ENCODE measurements at regions of chr2 and their contacts with region 1.

Region 1: DNA sequence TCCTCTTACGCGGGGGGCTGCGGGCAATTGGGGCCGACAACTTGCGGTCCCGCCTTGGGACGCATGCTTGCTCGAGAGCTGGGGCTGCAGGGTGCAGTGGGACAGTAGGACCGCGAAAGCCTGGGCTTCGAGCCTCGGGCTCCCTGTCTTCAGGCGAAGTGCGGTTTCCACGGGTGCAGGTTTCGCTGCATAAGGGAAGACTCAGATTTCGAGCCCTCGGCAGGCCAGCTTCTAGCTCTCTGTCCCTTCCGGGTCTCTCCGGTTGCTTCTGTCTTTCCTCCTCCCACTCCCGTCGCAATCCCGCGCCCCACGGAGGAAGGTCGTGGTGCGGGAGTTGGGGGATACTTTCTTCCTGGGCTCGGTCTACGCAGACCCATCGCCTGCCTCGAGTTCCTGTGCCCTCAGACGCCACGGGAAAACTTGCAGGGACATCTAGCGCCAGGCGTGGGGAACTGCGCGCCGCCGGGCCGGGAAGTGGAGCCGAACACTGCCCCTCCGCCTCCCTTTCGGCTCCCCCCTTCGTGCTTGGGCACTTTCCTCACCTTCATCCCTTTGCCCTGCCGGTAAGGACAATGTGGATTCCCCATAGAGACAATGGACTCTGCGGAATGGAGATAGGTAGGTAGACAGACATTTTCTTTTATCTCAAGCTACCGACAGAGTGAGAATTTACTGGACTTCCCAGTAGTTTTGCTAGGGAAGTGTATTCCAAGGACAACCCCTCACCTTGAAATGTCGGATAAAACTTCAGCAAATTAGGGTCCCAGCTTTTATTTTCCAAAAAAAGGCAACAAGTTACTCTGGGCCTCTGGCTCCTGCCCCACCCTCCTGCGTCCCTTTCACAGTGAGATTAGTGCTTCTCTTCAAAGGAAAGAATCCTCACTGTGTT is 4.2 kb upstream of the HOXD13 start:
- DNase-seq: peak; percentile 72
- ATAC-seq: peak; percentile 89

Region 2: GRCh38 chr2:175684457-175684856 is 403.8 kb before region 1 on chr2:
- intact Hi-C with region 1: loop called (anchors 5 kb)
- DNase-seq: no peak
- ATAC-seq: no peak

Region 3: DNA sequence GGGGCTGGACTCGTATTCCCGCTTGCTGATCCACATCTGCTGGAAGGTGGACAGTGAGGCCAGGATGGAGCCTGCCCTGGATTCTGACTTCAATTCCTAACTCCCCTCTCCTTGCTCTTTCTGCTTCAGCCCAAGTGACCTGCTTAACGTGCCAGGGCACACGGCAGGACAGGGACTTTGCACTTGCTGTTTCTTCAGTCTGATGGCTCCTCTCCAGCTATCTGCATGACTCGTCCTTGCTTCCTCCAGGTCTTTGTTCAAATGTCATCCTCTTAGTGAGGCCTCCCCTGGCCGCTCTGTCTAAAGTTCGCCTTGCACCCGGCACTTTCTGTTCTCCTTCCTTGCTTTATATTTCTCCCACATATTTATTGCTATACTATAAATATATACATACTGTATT is 538.5 kb after region 1 on chr2:
- intact Hi-C with region 1: no loop called
- DNase-seq: no peak
- ATAC-seq: no peak

Region 4: GRCh38 chr2:177909962-177910361 is 1821.7 kb after region 1 on chr2:
- intact Hi-C with region 1: no loop called
- DNase-seq: no peak
- ATAC-seq: no peak

Measured in left ventricle myocardium superior (tissue), 1 donor.